ENCODE measurements at regions of chr4 and their contacts with region 1.

Region 1: DNA sequence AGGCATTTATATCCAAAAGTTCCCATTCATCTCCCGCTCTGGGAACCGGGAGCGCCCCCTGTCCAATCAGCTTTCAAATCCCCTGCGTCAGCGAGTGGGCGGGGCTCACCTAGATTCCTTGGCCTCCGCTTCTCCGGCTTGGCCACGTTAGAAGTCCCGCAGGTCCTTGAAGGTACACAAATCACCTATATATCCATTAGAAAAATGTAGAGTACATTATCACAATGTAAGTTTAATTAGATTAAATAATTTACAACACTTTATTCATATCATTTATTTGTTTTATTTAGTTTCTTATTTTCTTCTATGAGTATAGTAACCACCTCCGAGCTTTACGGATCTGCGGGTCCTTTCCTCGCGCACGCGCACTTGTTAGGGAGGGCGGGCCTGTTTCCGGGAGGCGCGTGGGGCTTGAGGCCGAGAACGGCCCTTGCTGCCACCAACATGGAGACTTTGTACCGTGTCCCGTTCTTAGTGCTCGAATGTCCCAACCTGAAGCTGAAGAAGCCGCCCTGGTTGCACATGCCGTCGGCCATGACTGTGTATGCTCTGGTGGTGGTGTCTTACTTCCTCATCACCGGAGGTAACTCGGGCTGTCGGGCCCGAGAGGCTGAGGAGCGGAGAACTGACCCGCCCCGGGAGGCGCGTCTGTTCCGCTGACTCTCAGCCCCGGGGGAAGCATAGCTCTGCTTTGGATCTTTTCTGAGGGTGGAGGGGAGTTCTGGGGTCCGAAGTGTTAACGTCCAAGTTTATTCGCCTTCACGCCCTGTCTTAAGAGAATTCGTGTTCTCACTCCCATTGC is at the start of gene OSTC:
- DNase-seq: peak; percentile 88
- H3K4me3 ChIP-seq: peak within 1 kb of the TSS; percentile 85
- CTCF ChIP-seq: peak; percentile 38

Region 2: GRCh38 chr4:108454227-108454626 is 196.2 kb before region 1 on chr4:
- CTCF ChIA-PET with region 1: no interaction called
- POLR2A ChIA-PET with region 1: no interaction called
- DNase-seq: no peak
- H3K4me3 ChIP-seq: no peak overlapping the region
- CTCF ChIP-seq: no peak

Region 3: GRCh38 chr4:108519911-108520601 is 130.4 kb before region 1 on chr4:
- CTCF ChIA-PET with region 1: no interaction called
- POLR2A ChIA-PET with region 1: no interaction called
- DNase-seq: no peak
- H3K4me3 ChIP-seq: no peak overlapping the region
- CTCF ChIP-seq: no peak

Region 4: GRCh38 chr4:108637856-108638255 is 12.6 kb before region 1 on chr4:
- CTCF ChIA-PET with region 1: interaction called, 24 read pairs
- POLR2A ChIA-PET with region 1: interaction called, 3 read pairs
- DNase-seq: no peak
- H3K4me3 ChIP-seq: no peak overlapping the region
- CTCF ChIP-seq: no peak

Region 5: DNA sequence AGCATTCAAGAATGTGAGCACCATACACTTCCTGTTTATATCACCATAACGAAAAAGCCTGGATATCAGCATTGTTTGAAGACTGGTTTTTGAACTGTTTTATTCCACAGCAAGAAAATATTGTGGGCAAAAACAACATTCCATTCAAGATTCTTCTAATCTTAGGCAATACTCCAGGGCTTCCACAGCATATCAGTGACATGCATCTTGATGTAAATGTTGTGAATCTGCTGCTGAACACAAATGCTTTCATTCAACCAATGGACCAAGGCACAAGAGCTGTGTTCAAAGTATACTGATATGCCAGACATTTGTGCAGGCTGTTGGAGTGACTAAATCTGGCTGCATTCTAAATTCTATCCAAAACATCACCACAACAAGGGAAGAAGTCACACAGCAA is 372.5 kb after region 1 on chr4:
- CTCF ChIA-PET with region 1: no interaction called
- POLR2A ChIA-PET with region 1: no interaction called
- DNase-seq: no peak
- H3K4me3 ChIP-seq: no peak overlapping the region
- CTCF ChIP-seq: no peak

Measured in AG04449 (cell line).